Spleen (tissue), 13 donors: ENCODE measurements at regions of chr1 and their contacts with region 1.

Region 1: DNA sequence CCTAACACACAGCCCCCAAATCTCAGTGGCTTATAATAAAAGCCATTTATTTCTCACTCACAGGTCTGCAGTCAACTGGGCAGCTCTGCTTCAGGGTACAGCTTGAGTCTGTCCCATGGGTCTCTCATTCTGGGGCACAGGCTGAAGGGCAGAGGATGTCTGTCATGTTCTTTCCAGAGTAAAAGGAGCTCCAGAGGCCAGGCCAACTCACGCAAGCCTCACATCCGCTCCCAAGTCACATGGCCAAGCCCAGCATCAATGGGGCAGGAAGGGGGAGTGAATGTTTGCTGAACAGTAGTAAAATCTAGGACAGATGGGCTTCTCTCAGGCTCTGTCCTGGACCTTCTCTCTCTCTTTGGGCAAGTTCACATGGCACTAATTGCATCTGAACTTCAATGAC is 7.1 kb upstream of the SSBP3 start:
- DNase-seq: peak; percentile 83
- H3K4me3 ChIP-seq: no peak overlapping the region
- H3K27ac ChIP-seq: peak overlapping the region; percentile 10 to 78 (median 56)
- H3K4me1 ChIP-seq: peaks cover 7 to 38% (median 23%) of the 10 kb centered on the region in 6 donors
- H3K27me3 ChIP-seq: peaks cover 0 to 11% (median 0%) of the 10 kb centered on the region in 7 donors
- CTCF ChIP-seq: no peak
- POLR2A ChIP-seq: no peak

Region 2: DNA sequence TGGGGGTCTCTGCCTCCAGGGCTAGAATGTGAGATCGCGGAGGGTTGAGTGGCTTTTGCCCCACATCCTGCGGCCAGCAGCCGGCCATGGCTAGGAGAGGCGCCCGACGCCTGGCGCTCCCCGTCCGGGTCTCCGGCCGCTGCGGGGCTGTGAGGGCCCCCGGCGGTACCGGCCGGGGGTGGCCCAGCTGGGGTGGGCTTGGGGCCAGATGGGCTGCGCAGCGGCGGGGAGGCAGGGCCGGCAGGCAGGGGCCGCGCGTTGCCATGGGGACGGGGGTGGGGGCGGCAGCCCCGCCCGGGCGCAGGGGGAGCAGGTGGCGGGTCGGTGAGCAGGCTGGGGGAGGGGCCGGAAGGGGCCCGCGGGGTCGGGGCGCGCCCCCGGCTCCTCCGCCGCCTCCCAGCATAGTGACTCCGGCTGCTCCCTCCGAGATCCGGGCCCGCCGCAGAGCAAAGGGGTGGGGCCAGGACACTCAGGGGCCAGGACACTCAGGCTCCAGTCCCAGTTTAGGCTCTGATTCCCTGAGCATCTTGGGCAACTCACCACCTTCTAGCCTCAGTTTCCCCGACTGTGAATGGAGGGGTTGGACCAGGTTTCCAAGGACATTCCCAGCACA is 61.5 kb after region 1 on chr1:
- intact Hi-C with region 1: loop called (anchors 5 kb)
- DNase-seq: no peak
- H3K4me3 ChIP-seq: peak overlapping the region in 7 of 8 donors; percentile 15 to 68 (median 33)
- H3K27ac ChIP-seq: peak overlapping the region in 4 of 8 donors; percentile 56 to 69 (median 64)
- H3K4me1 ChIP-seq: peaks cover 6 to 57% (median 29%) of the 10 kb centered on the region in 6 donors
- H3K27me3 ChIP-seq: peaks cover 0 to 33% (median 6%) of the 10 kb centered on the region in 7 donors
- CTCF ChIP-seq: no peak
- POLR2A ChIP-seq: no peak